CD8-positive, alpha-beta T cell (primary cell): ENCODE measurements at regions of chr20 and their contacts with region 1.

Region 1: DNA sequence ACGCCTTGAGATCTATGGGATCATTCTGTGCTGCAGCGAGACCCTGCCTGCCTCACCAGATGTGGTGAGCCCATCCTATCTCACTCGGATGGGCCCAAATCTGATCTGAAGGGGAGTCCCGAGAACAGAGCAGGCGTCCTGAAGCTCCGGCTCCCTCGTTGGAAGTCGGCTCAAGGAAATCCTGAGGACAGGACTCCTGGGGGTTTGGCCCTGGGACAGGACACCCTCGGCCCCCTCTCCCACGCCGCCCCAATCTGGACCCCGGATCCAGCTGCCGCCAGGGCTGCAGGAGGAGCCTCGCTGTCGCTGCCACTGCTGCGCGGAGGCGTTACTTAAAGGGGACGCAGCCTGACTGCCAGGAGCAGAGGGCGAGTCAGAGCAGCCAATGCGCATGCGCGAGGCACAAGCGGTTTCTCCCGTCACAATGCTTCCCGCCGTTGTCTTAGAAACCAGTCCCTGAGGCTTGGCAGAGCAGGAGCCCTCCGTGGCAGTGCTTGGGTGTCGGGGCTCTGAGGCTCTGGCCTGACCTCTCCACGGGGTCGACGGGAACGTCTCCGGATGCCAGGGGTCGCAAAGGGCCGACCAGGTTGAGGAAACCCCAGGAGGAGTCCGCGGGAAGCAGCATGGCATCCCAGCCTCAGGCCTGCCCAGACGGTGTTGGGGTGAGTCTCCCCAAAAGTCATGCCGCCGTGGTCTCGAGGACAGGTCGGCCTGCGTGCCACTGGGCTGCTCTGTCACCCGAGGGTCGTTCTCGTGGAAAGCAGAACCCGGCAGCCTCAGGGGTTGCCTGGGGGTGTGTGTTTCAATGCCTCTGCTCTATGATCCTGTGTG is 1567.8 kb upstream of the DEFB115 start:
- DNase-seq: peak in 6 of 9 experiments; percentile 1 to 65 (median 12)
- ATAC-seq: peak; percentile 88
- H3K4me3 ChIP-seq: no peak overlapping the region
- H3K4me3 Mint-ChIP-seq: peak overlapping the region; percentile 77
- H3K27ac ChIP-seq: no peak overlapping the region
- H3K27ac Mint-ChIP-seq: peak overlapping the region; percentile 84
- H3K4me1 ChIP-seq: no peaks in the 10 kb centered on the region
- H3K4me1 Mint-ChIP-seq: peaks cover 2% of the 10 kb centered on the region
- H3K27me3 ChIP-seq: no peaks in the 10 kb centered on the region
- H3K27me3 Mint-ChIP-seq: no peaks in the 10 kb centered on the region
- CTCF ChIP-seq: no peak

Region 2: GRCh38 chr20:29427201-29428060 is 262.2 kb before region 1 on chr20:
- CTCF ChIA-PET with region 1: no interaction called
- POLR2A ChIA-PET with region 1: no interaction called
- intact Hi-C with region 1: no loop called
- DNase-seq: no peak
- ATAC-seq: no peak
- H3K4me3 ChIP-seq: no peak overlapping the region
- H3K4me3 Mint-ChIP-seq: no peak overlapping the region
- H3K27ac ChIP-seq: no peak overlapping the region
- H3K27ac Mint-ChIP-seq: no peak overlapping the region
- H3K4me1 ChIP-seq: no peaks in the 10 kb centered on the region
- H3K4me1 Mint-ChIP-seq: no peaks in the 10 kb centered on the region
- H3K27me3 ChIP-seq: no peaks in the 10 kb centered on the region
- H3K27me3 Mint-ChIP-seq: no peaks in the 10 kb centered on the region
- CTCF ChIP-seq: no peak

Region 3: DNA sequence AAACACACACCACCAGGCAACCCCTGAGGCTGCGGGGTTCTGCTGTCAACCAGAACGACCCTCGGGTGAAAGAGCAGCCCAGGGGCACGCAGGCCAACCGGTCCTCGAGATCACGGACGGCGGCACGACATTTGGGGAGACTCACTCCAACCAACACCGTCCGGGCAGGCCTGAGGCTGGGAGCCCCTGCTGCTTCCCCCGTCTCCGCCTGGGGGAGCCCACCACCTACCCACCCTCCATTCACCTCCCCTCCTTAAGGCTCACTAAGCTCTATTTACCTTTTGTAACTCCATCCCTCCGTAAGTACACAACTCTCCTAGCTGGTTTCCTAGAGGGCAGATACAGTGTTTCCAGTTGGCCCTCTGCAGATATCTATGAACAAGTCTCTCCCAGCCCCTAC is 596.5 kb after region 1 on chr20:
- CTCF ChIA-PET with region 1: no interaction called
- POLR2A ChIA-PET with region 1: no interaction called
- intact Hi-C with region 1: loop called (anchors 5 to 10 kb)
- DNase-seq: no peak
- ATAC-seq: no peak
- H3K4me3 ChIP-seq: no peak overlapping the region
- H3K4me3 Mint-ChIP-seq: no peak overlapping the region
- H3K27ac ChIP-seq: no peak overlapping the region
- H3K27ac Mint-ChIP-seq: peak overlapping the region; percentile 41
- H3K4me1 ChIP-seq: peaks cover 5% of the 10 kb centered on the region
- H3K4me1 Mint-ChIP-seq: peaks cover 31% of the 10 kb centered on the region
- H3K27me3 ChIP-seq: no peaks in the 10 kb centered on the region
- H3K27me3 Mint-ChIP-seq: no peaks in the 10 kb centered on the region
- CTCF ChIP-seq: no peak

Region 4: GRCh38 chr20:30376767-30377666 is 687.4 kb after region 1 on chr20:
- CTCF ChIA-PET with region 1: no interaction called
- POLR2A ChIA-PET with region 1: no interaction called
- intact Hi-C with region 1: loop called in 1 of 2 experiments (anchors 10 kb)
- DNase-seq: peak; percentile 77 to 95 (median 88)
- ATAC-seq: peak; percentile 88
- H3K4me3 ChIP-seq: peak overlapping the region; percentile 84 to 95
- H3K4me3 Mint-ChIP-seq: peak overlapping the region; percentile 88
- H3K27ac ChIP-seq: peak overlapping the region; percentile 75 to 83
- H3K27ac Mint-ChIP-seq: peak overlapping the region; percentile 94
- H3K4me1 ChIP-seq: no peaks in the 10 kb centered on the region
- H3K4me1 Mint-ChIP-seq: peaks cover 37% of the 10 kb centered on the region
- H3K27me3 ChIP-seq: no peaks in the 10 kb centered on the region
- H3K27me3 Mint-ChIP-seq: no peaks in the 10 kb centered on the region
- CTCF ChIP-seq: peak; percentile 45